ENCODE measurements at regions of chr22 and their contacts with region 1.

Region 1: DNA sequence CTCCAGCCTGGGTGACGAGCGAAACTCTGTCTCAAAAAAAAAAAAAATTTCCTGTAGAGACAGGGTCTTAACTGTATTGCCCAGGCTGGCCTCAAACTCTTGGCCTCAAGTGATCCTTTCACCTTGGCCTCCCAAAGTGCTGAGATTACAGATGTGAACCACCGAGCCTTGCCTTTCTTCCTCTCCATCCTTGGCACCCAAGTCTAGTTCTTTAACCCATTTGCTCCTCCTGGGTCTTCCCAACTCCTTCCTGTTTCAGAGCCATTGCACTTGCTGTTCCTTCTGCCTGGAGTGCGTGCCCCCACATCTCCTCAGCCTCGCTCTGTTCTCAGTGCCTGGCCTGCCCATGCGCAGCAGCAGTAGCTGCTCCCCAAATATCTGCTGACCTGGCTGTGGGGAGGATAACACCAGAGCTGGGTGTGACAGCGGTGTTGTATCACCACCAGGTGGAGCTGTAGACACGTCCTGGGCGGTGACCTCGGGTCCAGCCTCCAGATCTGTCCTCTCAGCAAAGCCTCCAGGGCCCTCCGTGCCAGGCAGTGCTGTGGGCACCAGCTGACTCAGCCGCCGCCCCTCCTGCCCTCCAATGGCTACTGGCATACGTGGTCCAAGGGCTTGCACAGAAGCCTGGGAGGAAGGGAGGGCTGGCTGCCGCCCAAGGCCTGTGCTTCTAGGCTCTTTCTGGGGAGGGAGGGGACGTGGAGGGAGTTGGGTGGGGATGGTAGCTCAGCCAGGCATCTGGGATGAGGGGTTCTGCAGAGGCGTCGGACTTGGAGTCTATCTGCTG is 22.0 kb downstream of the TEF start:
- DNase-seq: peak; percentile 80
- H3K4me3 ChIP-seq: no peak overlapping the region
- H3K27ac ChIP-seq: no peak overlapping the region
- H3K4me1 ChIP-seq: no peaks in the 10 kb centered on the region
- H3K27me3 ChIP-seq: no peaks in the 10 kb centered on the region
- CTCF ChIP-seq: peak; percentile 94 to 97
- POLR2A ChIP-seq: no peak

Region 2: DNA sequence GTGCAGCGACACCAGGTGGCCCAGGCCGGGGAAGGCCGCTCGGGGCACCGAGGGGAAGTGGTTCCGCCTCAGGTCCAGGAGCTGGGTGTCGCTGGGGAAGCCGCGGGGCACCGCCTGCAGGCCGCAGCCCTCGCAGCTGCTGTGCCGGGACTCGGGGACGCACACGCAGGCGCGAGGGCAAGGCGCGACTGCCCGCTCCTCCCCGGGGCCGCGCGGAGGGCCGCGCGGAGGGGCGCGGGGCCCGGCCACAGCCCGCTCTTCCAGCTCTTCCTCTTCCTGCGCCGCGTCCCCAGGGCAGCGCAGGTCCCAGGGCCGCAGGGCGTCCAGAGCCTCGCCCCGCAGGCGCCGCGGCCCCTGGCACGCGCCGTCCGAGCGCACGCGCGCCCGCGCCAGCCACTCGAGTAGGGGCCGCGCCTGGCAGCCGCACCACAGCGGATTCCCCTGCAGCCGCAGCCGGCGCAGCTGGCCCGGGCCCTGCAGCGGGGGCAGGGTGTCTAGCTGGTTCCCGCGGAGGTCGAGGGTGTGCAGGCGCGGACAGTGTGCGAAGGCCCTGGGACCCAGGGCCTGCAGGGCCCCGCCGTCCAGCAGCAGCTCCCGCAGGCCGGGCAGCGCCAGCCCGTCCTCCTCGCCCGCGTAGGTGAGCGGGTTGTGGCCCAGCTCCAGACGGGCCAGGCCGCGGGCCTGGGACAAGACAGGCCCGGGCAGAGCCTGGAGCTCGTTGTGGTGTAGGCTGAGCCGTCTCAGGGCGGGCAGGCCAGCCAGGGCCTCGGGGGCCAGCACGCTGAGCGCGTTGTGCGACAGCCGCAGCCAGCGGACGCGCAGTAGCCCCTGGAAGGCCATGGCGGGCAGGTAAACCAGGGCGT is 165.8 kb before region 1 on chr22:
- CTCF ChIA-PET with region 1: no interaction called
- POLR2A ChIA-PET with region 1: no interaction called
- dilution Hi-C with region 1: no loop called
- intact Hi-C with region 1: no loop called
- DNase-seq: peak; percentile 31
- H3K4me3 ChIP-seq: peak overlapping the region in 1 of 3 experiments; percentile 5
- H3K27ac ChIP-seq: no peak overlapping the region
- H3K4me1 ChIP-seq: peaks cover 6% of the 10 kb centered on the region
- H3K27me3 ChIP-seq: no peaks in the 10 kb centered on the region
- CTCF ChIP-seq: peak; percentile 28 to 58
- POLR2A ChIP-seq: peak; percentile 56

Region 3: GRCh38 chr22:41417622-41418390 is 14.1 kb after region 1 on chr22:
- CTCF ChIA-PET with region 1: interaction called, 16 read pairs
- POLR2A ChIA-PET with region 1: no interaction called
- dilution Hi-C with region 1: no loop called
- intact Hi-C with region 1: no loop called
- DNase-seq: peak; percentile 24
- H3K4me3 ChIP-seq: no peak overlapping the region
- H3K27ac ChIP-seq: no peak overlapping the region
- H3K4me1 ChIP-seq: peaks cover 13% of the 10 kb centered on the region
- H3K27me3 ChIP-seq: no peaks in the 10 kb centered on the region
- CTCF ChIP-seq: no peak
- POLR2A ChIP-seq: no peak

Region 4: GRCh38 chr22:41468381-41469217 is 64.9 kb after region 1 on chr22 and contains the starts of genes ACO2 and PHF5A:
- CTCF ChIA-PET with region 1: interaction called, 12 read pairs
- POLR2A ChIA-PET with region 1: no interaction called
- dilution Hi-C with region 1: no loop called
- intact Hi-C with region 1: loop called (anchors 1 kb)
- DNase-seq: peak; percentile 99
- H3K4me3 ChIP-seq: peak within 1 kb of the TSS; percentile 78 to 96 (median 81)
- H3K27ac ChIP-seq: peak within 1 kb of the TSS; percentile 83
- H3K4me1 ChIP-seq: peaks cover 17% of the 10 kb centered on the region
- H3K27me3 ChIP-seq: no peaks in the 10 kb centered on the region
- CTCF ChIP-seq: no peak
- POLR2A ChIP-seq: peak; percentile 64
- total RNA-seq, gene ACO2: 79.1 and 79.7 TPM in 2 replicates
- total RNA-seq, gene PHF5A: 55.9 and 63.7 TPM in 2 replicates

Region 5: GRCh38 chr22:41517172-41518047 is 113.7 kb after region 1 on chr22:
- CTCF ChIA-PET with region 1: interaction called, 251 read pairs
- POLR2A ChIA-PET with region 1: no interaction called
- dilution Hi-C with region 1: no loop called
- intact Hi-C with region 1: loop called (anchors 1 kb)
- DNase-seq: peak; percentile 64
- H3K4me3 ChIP-seq: no peak overlapping the region
- H3K27ac ChIP-seq: no peak overlapping the region
- H3K4me1 ChIP-seq: peaks cover 3% of the 10 kb centered on the region
- H3K27me3 ChIP-seq: no peaks in the 10 kb centered on the region
- CTCF ChIP-seq: peak; percentile 80 to 89
- POLR2A ChIP-seq: no peak

Region 6: DNA sequence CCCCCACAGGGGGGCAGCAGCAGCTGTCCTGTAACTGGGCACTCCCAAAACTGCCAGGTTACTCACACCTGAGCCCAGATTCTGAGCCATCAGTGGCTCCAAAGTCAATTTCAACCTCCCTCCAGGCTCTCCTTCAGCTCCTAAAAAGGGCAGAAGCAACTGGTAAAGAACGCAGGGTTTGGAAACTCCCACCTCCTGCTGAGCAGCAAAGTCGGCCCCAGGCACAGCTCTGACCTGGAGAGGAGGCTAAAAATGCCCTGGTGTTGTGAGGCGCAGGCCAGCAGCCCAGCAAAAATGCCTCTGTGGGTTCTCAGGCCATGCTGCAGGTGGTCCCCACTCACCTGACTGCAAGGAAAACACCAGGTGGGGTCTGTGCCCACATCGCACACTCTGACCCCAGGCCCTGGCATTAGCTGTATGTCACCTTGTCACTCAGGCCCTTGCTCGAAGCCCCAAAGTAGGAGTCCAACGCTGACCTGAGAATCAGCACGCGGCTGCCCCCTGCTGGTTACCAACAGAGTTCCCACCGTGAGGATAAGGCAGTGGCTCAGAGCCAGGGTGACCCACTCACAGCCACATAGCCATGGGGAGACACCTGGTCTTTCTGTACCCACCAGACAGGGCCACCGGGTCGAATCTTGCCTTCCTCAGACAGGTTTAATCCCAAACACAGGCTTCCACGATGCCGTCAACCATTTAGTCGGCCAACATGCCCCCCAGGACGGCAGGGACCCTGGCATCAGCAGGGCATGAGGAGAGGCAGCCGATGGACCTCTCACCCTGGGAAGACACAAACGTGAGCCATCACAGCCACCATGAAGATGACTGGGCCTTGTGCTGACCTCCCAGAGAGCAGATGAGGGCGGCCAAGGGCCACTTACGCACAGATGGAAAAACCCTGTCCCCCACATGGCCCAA is 129.4 kb after region 1 on chr22:
- CTCF ChIA-PET with region 1: interaction called, 124 read pairs
- POLR2A ChIA-PET with region 1: interaction called, 5 read pairs
- dilution Hi-C with region 1: no loop called
- intact Hi-C with region 1: no loop called
- DNase-seq: peak; percentile 59
- H3K4me3 ChIP-seq: no peak overlapping the region
- H3K27ac ChIP-seq: no peak overlapping the region
- H3K4me1 ChIP-seq: no peaks in the 10 kb centered on the region
- H3K27me3 ChIP-seq: no peaks in the 10 kb centered on the region
- CTCF ChIP-seq: peak; percentile 86 to 87
- POLR2A ChIP-seq: no peak